ENCODE measurements at regions of chr1 and their contacts with region 1.

Region 1: DNA sequence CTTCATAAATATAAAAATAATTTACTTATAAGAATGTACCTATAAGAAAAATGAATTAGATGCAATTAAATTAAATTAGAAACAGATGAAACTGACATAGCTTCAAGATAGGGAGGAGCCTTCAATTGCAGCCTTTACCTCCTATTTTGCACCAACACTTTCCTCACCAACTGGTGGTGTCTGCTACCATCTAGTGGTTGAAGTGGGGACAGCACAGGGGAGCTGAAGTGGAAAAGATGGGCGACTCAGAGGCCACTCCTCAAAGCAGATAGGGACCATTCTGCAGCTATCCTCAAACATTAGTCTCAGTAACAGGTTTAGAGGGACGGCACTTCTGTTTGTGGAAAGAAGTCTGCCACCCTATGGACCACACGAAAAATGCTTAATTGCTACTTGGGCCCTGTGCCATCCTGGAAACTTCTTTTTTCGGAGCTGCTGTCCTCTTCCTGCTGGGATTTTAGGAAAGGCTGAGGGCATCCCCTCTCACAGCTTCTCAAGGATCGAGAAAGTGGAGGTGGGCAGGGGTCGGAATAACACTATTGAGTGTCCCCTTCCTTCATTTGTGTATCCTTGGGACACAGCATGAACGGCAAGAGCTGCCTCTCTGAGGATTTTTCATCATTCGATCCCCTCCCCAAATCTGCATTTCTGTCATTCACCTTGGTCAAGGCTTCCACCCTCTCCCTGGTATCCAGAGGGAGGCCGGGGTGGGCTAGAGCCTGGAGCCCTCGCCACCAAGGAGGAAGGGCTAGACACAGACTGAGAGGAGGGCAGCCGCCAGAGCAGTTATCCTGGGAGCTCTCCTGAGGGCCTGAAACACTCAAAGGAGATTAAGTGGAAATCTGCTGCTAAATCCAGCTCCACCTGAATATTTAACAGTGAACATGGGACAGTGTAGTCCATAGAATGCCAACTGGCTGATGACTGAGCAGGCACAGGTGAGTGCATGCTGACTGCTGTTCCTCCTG is 9.6 kb downstream of the PROK1 start:
- DNase-seq: peak in 1 of 2 experiments; percentile 93
- H3K4me3 ChIP-seq: no peak overlapping the region
- H3K27ac ChIP-seq: no peak overlapping the region
- H3K4me1 ChIP-seq: no peaks in the 10 kb centered on the region
- H3K27me3 ChIP-seq: no peaks in the 10 kb centered on the region
- CTCF ChIP-seq: peak; percentile 87 to 97 (median 95)
- EP300 ChIP-seq: no peak
- POLR2A ChIP-seq: no peak
- RAD21 ChIP-seq: peak; percentile 100

Region 2: GRCh38 chr1:110161877-110162276 is 298.7 kb before region 1 on chr1:
- CTCF ChIA-PET with region 1: interaction called, 20 read pairs
- POLR2A ChIA-PET with region 1: no interaction called
- DNase-seq: no peak
- H3K4me3 ChIP-seq: no peak overlapping the region
- H3K27ac ChIP-seq: no peak overlapping the region
- H3K4me1 ChIP-seq: no peaks in the 10 kb centered on the region; a peak in 1 of 7 replicates
- H3K27me3 ChIP-seq: no peaks in the 10 kb centered on the region; a peak in 1 of 7 replicates
- CTCF ChIP-seq: no peak
- EP300 ChIP-seq: no peak
- POLR2A ChIP-seq: no peak
- RAD21 ChIP-seq: no peak

Region 3: GRCh38 chr1:110209715-110210603 is 250.6 kb before region 1 on chr1 and contains the start of gene KCNC4:
- CTCF ChIA-PET with region 1: interaction called, 230 read pairs
- POLR2A ChIA-PET with region 1: no interaction called
- DNase-seq: peak; percentile 72 to 85
- H3K4me3 ChIP-seq: peak within 1 kb of the TSS; percentile 41 to 78 (median 62)
- H3K27ac ChIP-seq: no peak within 1 kb of the TSS
- H3K4me1 ChIP-seq: peaks cover 7 to 23% (median 20%) of the 10 kb centered on the region in 4 experiments
- H3K27me3 ChIP-seq: peaks cover 5 to 22% (median 21%) of the 10 kb centered on the region in 4 experiments
- CTCF ChIP-seq: no peak
- EP300 ChIP-seq: peak in 1 of 2 experiments; percentile 85; a peak in 1 of 3 replicates
- POLR2A ChIP-seq: peak in 1 of 2 experiments; percentile 38; a peak in 1 of 3 replicates
- RAD21 ChIP-seq: no peak
- total RNA-seq, gene KCNC4: 11.2 TPM in 2 replicates

Region 4: DNA sequence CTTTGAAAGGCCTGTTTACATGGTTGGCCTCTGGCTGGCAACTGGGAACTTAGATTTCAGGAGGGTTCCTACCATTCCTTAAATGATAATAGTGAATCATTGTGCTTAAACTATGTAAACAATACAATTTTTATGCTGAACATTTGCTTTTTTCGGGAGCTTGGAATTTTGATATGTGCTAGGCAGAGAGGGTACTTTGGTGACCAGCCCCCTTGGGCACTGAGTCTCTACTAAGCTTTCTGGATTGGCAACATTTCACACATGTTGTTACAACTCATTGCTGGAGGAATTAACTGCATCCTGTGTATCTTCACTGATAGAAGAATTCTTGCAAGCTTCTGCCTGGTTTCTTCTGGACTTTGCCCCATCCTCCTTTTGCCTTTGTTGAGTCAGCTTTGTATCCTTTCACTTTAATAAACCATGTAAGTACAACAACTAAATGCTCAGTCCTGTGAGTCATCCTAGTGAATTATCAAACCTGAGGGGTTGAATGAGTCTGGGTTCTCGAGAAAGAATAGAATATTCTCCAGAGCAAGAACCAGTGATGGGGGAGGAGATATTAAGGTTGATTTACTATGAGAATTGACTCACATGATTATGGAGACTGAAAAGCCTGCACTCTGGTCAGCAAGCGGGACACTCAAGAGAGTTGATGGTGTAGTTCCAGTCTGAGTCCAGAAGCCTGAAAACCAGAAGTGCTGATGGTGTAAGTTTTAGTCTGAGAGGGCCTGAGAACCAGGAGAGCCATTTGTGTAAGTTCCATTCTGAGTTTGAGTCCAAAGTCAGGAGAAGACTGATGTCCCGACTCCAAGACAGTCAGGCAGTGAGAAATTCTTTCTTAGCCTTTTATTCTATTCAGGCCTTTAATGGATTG is 66.6 kb before region 1 on chr1:
- CTCF ChIA-PET with region 1: interaction called, 12 read pairs
- POLR2A ChIA-PET with region 1: no interaction called
- DNase-seq: no peak
- H3K4me3 ChIP-seq: no peak overlapping the region
- H3K27ac ChIP-seq: no peak overlapping the region
- H3K4me1 ChIP-seq: peaks cover 0 to 6% (median 4%) of the 10 kb centered on the region in 4 experiments; a peak in 3 of 7 replicates
- H3K27me3 ChIP-seq: no peaks in the 10 kb centered on the region
- CTCF ChIP-seq: no peak
- EP300 ChIP-seq: no peak
- POLR2A ChIP-seq: no peak
- RAD21 ChIP-seq: no peak

Region 5: GRCh38 chr1:110449661-110450651 is 10.6 kb before region 1 on chr1:
- CTCF ChIA-PET with region 1: interaction called, 465 read pairs
- POLR2A ChIA-PET with region 1: no interaction called
- DNase-seq: no peak
- H3K4me3 ChIP-seq: no peak overlapping the region
- H3K27ac ChIP-seq: no peak overlapping the region
- H3K4me1 ChIP-seq: peaks cover 2 to 5% (median 3%) of the 10 kb centered on the region in 4 experiments; a peak in 4 of 7 replicates
- H3K27me3 ChIP-seq: no peaks in the 10 kb centered on the region
- CTCF ChIP-seq: no peak
- EP300 ChIP-seq: no peak
- POLR2A ChIP-seq: no peak
- RAD21 ChIP-seq: no peak

Region 6: DNA sequence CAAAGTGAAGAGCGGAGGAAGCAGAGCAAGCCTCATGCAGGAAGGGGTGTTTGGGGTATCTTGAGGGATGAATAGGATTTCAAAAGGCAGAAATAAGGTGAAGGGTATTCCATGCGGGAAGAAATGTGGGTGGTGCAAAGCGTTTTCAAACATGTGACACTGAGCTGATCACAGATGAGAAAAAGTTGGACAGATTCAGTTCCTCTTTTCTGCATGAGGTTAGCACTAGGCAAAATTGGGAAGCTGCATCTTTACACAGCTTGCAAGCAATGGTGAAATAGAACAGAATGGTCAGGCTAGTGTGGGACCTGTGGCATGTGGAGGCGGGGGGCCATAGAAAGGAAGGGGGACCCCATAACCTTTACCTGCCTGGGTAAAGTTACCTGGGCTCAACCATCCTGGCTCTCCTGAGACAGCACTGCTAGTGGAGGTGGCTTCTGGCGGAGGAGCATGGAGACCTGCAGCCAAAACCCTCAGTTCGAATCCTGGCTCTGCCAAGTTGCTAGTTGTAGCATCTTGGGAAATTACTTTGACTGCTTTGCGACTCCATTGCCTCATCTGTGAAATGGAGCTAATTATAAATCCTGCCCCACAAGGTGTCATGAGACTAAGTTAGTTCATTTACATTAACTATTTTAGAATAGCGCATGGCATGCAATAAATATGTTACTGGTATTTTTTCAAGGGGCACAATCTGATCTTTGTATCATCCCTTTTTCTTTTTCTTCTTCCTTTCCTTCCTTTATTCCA is 42.0 kb after region 1 on chr1:
- CTCF ChIA-PET with region 1: interaction called, 243 read pairs
- POLR2A ChIA-PET with region 1: no interaction called
- DNase-seq: no peak
- H3K4me3 ChIP-seq: no peak overlapping the region
- H3K27ac ChIP-seq: no peak overlapping the region
- H3K4me1 ChIP-seq: peaks cover 0 to 1% (median 0%) of the 10 kb centered on the region in 4 experiments; a peak in 2 of 7 replicates
- H3K27me3 ChIP-seq: no peaks in the 10 kb centered on the region; a peak in 2 of 7 replicates
- CTCF ChIP-seq: no peak
- EP300 ChIP-seq: no peak
- POLR2A ChIP-seq: no peak
- RAD21 ChIP-seq: no peak